MCF 10A (cell line): ENCODE measurements at regions of chr16 and their contacts with region 1.

Region 1: GRCh38 chr16:81600901-81601428 is 156.4 kb downstream of the CMIP start:
- DNase-seq: peak; percentile 86
- H3K4me3 Mint-ChIP-seq: no peak overlapping the region
- H3K27ac Mint-ChIP-seq: peak overlapping the region; percentile 88
- H3K4me1 Mint-ChIP-seq: peaks cover 58% of the 10 kb centered on the region
- H3K27me3 Mint-ChIP-seq: no peaks in the 10 kb centered on the region
- CTCF ChIP-seq: no peak

Region 2: GRCh38 chr16:81384006-81384405 is 217.0 kb before region 1 on chr16:
- CTCF ChIA-PET with region 1: no interaction called
- POLR2A ChIA-PET with region 1: no interaction called
- intact Hi-C with region 1: no loop called
- DNase-seq: no peak
- H3K4me3 Mint-ChIP-seq: no peak overlapping the region
- H3K27ac Mint-ChIP-seq: no peak overlapping the region
- H3K4me1 Mint-ChIP-seq: no peaks in the 10 kb centered on the region
- H3K27me3 Mint-ChIP-seq: no peaks in the 10 kb centered on the region
- CTCF ChIP-seq: no peak

Region 3: GRCh38 chr16:81585785-81586184 is 15.2 kb before region 1 on chr16:
- CTCF ChIA-PET with region 1: interaction called, 7 read pairs
- POLR2A ChIA-PET with region 1: interaction called, 13 read pairs
- intact Hi-C with region 1: no loop called
- DNase-seq: peak; percentile 39
- H3K4me3 Mint-ChIP-seq: no peak overlapping the region
- H3K27ac Mint-ChIP-seq: peak overlapping the region; percentile 77
- H3K4me1 Mint-ChIP-seq: peaks cover 56% of the 10 kb centered on the region
- H3K27me3 Mint-ChIP-seq: no peaks in the 10 kb centered on the region
- CTCF ChIP-seq: no peak

Region 4: DNA sequence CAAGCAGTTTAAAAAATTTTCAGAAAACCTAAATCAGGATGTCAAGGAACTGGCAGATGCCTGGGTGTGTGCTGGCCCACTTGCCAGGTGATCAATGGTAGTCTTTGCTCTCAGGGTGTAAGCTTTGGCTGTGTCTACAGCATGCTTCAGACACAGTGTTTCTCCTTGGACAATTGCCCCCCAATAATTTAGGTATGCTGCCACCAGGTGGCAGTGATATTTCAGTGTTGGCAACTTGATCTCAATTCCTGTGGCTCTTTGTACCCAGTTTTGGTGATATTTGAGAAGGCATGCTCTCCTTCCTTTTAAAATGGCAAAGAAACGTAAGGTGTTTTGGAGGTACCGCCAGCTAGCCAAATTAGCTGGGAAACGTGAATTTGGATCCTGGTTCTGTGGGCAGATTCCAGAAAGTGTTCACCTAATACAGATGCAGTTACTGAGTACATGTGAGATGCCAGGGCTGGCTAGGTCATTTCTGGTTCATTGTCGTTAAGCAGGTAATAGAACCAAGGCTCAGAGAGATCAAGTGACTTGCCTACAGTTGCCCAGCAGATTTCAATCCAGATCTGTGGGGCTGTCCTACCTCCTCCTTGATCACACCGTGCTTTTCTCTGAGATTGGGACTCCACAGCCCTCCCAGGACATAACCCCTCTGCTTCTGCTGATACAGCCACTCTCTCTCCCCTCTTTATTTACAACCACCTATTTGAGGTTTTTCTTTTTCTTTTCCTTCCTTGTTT is 22.6 kb after region 1 on chr16:
- CTCF ChIA-PET with region 1: interaction called, 12 read pairs
- POLR2A ChIA-PET with region 1: interaction called, 24 read pairs
- intact Hi-C with region 1: no loop called
- DNase-seq: peak; percentile 73
- H3K4me3 Mint-ChIP-seq: no peak overlapping the region
- H3K27ac Mint-ChIP-seq: no peak overlapping the region
- H3K4me1 Mint-ChIP-seq: peaks cover 9% of the 10 kb centered on the region
- H3K27me3 Mint-ChIP-seq: no peaks in the 10 kb centered on the region
- CTCF ChIP-seq: peak; percentile 64